HepG2 (cell line): ENCODE measurements at regions of chr12 and their contacts with region 1.

Region 1: GRCh38 chr12:93563807-93564538 is 8.5 kb upstream of the SOCS2 start:
- DNase-seq: peak; percentile 100
- ATAC-seq: peak; percentile 99
- H3K4me3 ChIP-seq: peak overlapping the region in 1 of 3 experiments; percentile 27; a peak in 1 of 6 replicates
- H3K27ac ChIP-seq: peak overlapping the region; percentile 82
- H3K4me1 ChIP-seq: peaks cover 39% of the 10 kb centered on the region
- H3K27me3 ChIP-seq: no peaks in the 10 kb centered on the region
- CTCF ChIP-seq: peak; percentile 46
- EP300 ChIP-seq: peak; percentile 98 to 99
- POLR2A ChIP-seq: no peak; a peak in 1 of 4 replicates
- RAD21 ChIP-seq: peak; percentile 42; the same call in 1 of the 2 replicates

Region 2: DNA sequence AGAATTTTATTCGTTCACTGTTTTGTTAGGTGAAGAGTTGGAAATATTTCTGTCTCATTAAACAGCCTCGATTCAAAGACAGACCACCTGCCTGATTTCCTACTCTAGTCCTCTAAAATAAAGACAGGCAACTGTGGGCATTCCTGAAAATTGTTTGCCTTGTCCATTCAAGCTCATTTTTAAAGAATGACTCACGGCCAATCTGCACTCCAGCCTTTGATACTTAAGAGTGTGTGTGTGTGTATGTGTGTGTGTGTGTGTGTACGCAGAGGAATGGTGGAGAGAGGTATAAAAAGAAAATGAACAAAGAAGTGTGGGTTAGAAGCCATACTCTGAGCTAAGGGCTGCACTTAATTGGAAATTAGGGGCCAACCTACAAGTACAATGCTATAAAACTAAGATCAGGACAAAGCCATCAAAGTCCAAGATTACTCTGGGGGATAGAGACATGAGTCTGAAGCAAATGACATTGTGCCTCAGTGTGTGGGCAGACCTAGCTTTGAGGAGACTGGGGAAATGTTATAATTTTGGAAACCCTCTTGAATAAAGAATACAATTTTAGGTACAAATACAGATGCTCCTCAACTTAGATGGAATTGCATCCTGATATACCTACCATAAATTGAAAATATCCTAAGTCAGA is 37.1 kb before region 1 on chr12:
- CTCF ChIA-PET with region 1: no interaction called
- POLR2A ChIA-PET with region 1: interaction called, 14 read pairs
- in situ Hi-C with region 1: no loop called
- intact Hi-C with region 1: loop called (anchors 2 kb)
- DNase-seq: peak; percentile 86
- ATAC-seq: peak; percentile 55
- H3K4me3 ChIP-seq: no peak overlapping the region
- H3K27ac ChIP-seq: no peak overlapping the region
- H3K4me1 ChIP-seq: peaks cover 42% of the 10 kb centered on the region
- H3K27me3 ChIP-seq: no peaks in the 10 kb centered on the region; a peak in 1 of 5 replicates
- CTCF ChIP-seq: no peak
- EP300 ChIP-seq: peak in 1 of 2 experiments; percentile 60; a peak in 2 of 4 replicates
- POLR2A ChIP-seq: no peak
- RAD21 ChIP-seq: no peak

Region 3: GRCh38 chr12:94062796-94063635 is 499.0 kb after region 1 on chr12:
- CTCF ChIA-PET with region 1: no interaction called
- POLR2A ChIA-PET with region 1: no interaction called
- in situ Hi-C with region 1: no loop called
- intact Hi-C with region 1: no loop called
- DNase-seq: no peak
- ATAC-seq: no peak
- H3K4me3 ChIP-seq: no peak overlapping the region
- H3K27ac ChIP-seq: no peak overlapping the region
- H3K4me1 ChIP-seq: peaks cover 49% of the 10 kb centered on the region
- H3K27me3 ChIP-seq: no peaks in the 10 kb centered on the region
- CTCF ChIP-seq: no peak
- EP300 ChIP-seq: no peak
- POLR2A ChIP-seq: no peak
- RAD21 ChIP-seq: no peak

Region 4: DNA sequence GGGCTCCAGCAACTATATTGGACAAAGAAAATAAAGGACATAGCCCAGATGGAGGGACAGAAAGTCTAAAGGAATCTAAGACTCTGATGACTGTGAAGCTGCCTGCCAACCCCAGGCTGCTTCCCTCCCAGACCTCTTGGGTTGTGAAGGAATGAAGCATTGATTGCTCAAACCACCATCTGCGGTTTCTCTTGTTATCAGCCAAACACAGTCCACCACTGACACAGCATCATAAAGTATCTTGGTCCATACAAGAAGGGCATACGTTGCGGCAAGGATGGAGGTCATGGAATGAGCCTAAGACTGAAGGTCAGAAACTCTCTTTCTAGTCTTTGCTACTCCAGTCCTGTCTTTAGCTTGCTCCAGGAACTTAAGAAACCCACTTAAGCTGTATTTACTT is 525.9 kb after region 1 on chr12:
- CTCF ChIA-PET with region 1: no interaction called
- POLR2A ChIA-PET with region 1: no interaction called
- in situ Hi-C with region 1: no loop called
- intact Hi-C with region 1: loop called (anchors 5 kb)
- DNase-seq: no peak
- ATAC-seq: no peak
- H3K4me3 ChIP-seq: no peak overlapping the region
- H3K27ac ChIP-seq: no peak overlapping the region
- H3K4me1 ChIP-seq: no peaks in the 10 kb centered on the region
- H3K27me3 ChIP-seq: no peaks in the 10 kb centered on the region; a peak in 1 of 5 replicates
- CTCF ChIP-seq: no peak
- EP300 ChIP-seq: no peak
- POLR2A ChIP-seq: no peak
- RAD21 ChIP-seq: no peak